Astrocyte of the cerebellum (primary cell): ENCODE measurements at regions of chr2 and their contacts with region 1.

Region 1: DNA sequence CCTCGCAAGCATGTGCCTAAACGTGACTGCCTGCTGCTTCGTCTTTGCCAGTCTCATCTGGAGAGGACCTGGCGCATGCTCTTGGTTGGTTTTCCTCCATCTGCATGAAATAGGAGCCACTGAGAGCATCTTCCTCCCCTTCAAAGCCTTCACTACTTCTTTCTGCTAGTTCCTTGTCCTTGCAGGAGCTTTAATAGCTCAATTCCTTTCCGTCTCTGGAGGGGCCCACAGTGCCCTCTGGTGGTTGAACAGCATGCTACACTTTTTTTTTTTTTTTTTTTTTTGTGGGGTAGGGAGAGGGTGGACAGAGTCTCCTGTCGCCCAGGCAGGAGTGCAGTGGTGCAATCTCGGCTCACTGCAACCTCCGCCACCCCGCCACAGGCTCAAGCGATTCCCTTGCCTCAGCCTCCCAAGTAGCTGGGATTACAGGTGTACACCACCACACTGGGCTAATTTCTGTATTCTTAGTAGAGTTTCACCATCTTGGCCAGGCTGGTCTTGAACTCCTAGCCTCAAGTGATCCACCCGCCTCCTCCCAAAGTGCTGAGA is 59.6 kb downstream of the SP110 start:
- DNase-seq: peak; percentile 8
- H3K4me3 ChIP-seq: no peak overlapping the region
- CTCF ChIP-seq: peak; percentile 74

Region 2: GRCh38 chr2:230058032-230058431 is 102.2 kb before region 1 on chr2:
- in situ Hi-C with region 1: loop called (anchors 5 kb)
- DNase-seq: no peak
- H3K4me3 ChIP-seq: no peak overlapping the region
- CTCF ChIP-seq: no peak